ENCODE measurements at regions of chr19 and their contacts with region 1.

Region 1: GRCh38 chr19:41859618-41860418 is at the start of gene RPS19:
- DNase-seq: peak; percentile 96 to 99 (median 98)
- ATAC-seq: peak; percentile 87
- H3K4me3 ChIP-seq: peak within 1 kb of the TSS; percentile 74 to 92
- H3K4me3 Mint-ChIP-seq: peak within 1 kb of the TSS; percentile 94
- H3K27ac ChIP-seq: peak within 1 kb of the TSS; percentile 79 to 97
- H3K27ac Mint-ChIP-seq: peak within 1 kb of the TSS; percentile 96
- H3K4me1 ChIP-seq: peaks cover 46% of the 10 kb centered on the region
- H3K4me1 Mint-ChIP-seq: peaks cover 50% of the 10 kb centered on the region
- H3K27me3 ChIP-seq: no peaks in the 10 kb centered on the region
- H3K27me3 Mint-ChIP-seq: peaks cover 4% of the 10 kb centered on the region
- CTCF ChIP-seq: peak; percentile 82
- total RNA-seq, gene RPS19: 3,663 to 3,781 TPM

Region 2: DNA sequence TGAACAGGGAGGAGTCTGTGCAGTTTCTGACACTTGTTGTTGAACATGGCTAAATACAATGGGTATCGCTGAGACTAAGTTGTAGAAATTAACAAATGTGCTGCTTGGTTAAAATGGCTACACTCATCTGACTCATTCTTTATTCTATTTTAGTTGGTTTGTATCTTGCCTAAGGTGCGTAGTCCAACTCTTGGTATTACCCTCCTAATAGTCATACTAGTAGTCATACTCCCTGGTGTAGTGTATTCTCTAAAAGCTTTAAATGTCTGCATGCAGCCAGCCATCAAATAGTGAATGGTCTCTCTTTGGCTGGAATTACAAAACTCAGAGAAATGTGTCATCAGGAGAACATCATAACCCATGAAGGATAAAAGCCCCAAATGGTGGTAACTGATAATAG is 88.4 kb before region 1 on chr19:
- CTCF ChIA-PET with region 1: no interaction called
- POLR2A ChIA-PET with region 1: no interaction called
- intact Hi-C with region 1: no loop called
- DNase-seq: no peak
- ATAC-seq: no peak
- H3K4me3 ChIP-seq: no peak overlapping the region
- H3K4me3 Mint-ChIP-seq: no peak overlapping the region
- H3K27ac ChIP-seq: no peak overlapping the region
- H3K27ac Mint-ChIP-seq: no peak overlapping the region
- H3K4me1 ChIP-seq: peaks cover 32% of the 10 kb centered on the region
- H3K4me1 Mint-ChIP-seq: peaks cover 37% of the 10 kb centered on the region
- H3K27me3 ChIP-seq: peaks cover 3 to 9% of the 10 kb centered on the region in 2 experiments
- H3K27me3 Mint-ChIP-seq: peaks cover 51% of the 10 kb centered on the region
- CTCF ChIP-seq: no peak

Region 3: DNA sequence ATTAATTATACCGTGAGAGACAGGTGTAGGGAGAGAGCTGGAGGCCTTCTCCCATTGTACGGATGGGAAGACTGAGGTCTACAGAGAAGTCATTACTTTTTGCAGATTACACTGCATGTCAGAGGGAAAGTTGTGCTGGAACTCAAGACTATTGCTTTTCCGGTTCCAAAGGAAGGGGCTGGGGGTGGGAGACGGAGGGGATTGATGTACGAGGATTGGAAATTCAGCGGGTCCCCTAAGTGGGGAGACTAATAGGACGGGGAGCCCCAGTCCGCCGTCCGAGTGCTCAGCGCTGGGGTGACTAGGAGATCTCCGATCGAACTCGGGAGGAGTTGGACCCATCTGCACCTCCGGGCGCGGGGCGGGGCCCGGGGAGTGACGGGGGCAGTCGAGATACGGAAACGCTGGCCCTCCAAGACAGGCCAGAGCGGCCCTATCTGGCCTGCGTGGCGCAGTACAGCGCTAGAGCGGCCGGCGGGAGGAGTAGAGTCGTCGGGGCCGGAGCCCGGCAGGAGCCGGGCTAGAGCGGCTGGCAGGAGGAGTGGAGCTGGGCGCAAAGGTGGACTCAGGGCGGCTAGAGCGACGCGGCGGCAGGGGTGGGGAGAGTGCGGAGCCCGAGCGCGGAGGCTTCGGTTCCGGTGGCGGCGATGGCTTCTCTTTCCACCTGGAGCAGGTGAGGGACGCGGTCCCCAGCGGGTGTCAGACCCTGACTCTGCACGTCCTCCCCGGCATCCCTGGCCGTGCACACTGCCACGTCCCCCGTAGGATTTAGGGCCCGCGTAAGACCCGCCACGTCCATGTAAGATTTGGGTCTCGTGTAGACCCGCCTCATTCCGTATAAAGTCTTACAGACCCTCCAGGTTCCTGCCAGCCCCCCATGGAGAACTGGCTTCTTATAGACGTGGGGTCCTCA is 24.3 kb after region 1 on chr19:
- CTCF ChIA-PET with region 1: interaction called, 37 read pairs
- POLR2A ChIA-PET with region 1: interaction called, 120 read pairs
- intact Hi-C with region 1: loop called (anchors 1 kb)
- DNase-seq: peak; percentile 78 to 96 (median 90)
- ATAC-seq: peak; percentile 41
- H3K4me3 ChIP-seq: peak overlapping the region; percentile 97 to 99
- H3K4me3 Mint-ChIP-seq: peak overlapping the region; percentile 93
- H3K27ac ChIP-seq: peak overlapping the region; percentile 78 to 90
- H3K27ac Mint-ChIP-seq: peak overlapping the region; percentile 99
- H3K4me1 ChIP-seq: peaks cover 50% of the 10 kb centered on the region
- H3K4me1 Mint-ChIP-seq: peaks cover 68% of the 10 kb centered on the region
- H3K27me3 ChIP-seq: no peaks in the 10 kb centered on the region
- H3K27me3 Mint-ChIP-seq: no peaks in the 10 kb centered on the region
- CTCF ChIP-seq: no peak

Region 4: GRCh38 chr19:41928221-41928683 is 68.4 kb after region 1 on chr19 and contains the start of gene ERFL:
- CTCF ChIA-PET with region 1: interaction called, 7 read pairs
- POLR2A ChIA-PET with region 1: interaction called, 15 read pairs
- intact Hi-C with region 1: no loop called
- DNase-seq: peak in 3 of 9 experiments; percentile 23 to 55 (median 40)
- ATAC-seq: peak; percentile 37
- H3K4me3 ChIP-seq: peak within 1 kb of the TSS; percentile 54 to 58
- H3K4me3 Mint-ChIP-seq: no peak within 1 kb of the TSS
- H3K27ac ChIP-seq: peak within 1 kb of the TSS in 1 of 2 experiments; percentile 56
- H3K27ac Mint-ChIP-seq: peak within 1 kb of the TSS; percentile 96
- H3K4me1 ChIP-seq: peaks cover 24% of the 10 kb centered on the region
- H3K4me1 Mint-ChIP-seq: peaks cover 34% of the 10 kb centered on the region
- H3K27me3 ChIP-seq: peaks cover 0 to 13% of the 10 kb centered on the region in 2 experiments
- H3K27me3 Mint-ChIP-seq: no peaks in the 10 kb centered on the region
- CTCF ChIP-seq: no peak
- total RNA-seq, gene ERFL: 5.4 to 6.8 TPM

Region 5: GRCh38 chr19:41951686-41952172 is 91.9 kb after region 1 on chr19:
- CTCF ChIA-PET with region 1: interaction called, 43 read pairs
- POLR2A ChIA-PET with region 1: interaction called, 23 read pairs
- intact Hi-C with region 1: loop called (anchors 1 to 2 kb)
- DNase-seq: peak; percentile 73 to 97 (median 89)
- ATAC-seq: peak; percentile 88
- H3K4me3 ChIP-seq: no peak overlapping the region
- H3K4me3 Mint-ChIP-seq: no peak overlapping the region
- H3K27ac ChIP-seq: no peak overlapping the region
- H3K27ac Mint-ChIP-seq: peak overlapping the region; percentile 85
- H3K4me1 ChIP-seq: peaks cover 15% of the 10 kb centered on the region
- H3K4me1 Mint-ChIP-seq: peaks cover 31% of the 10 kb centered on the region
- H3K27me3 ChIP-seq: no peaks in the 10 kb centered on the region
- H3K27me3 Mint-ChIP-seq: no peaks in the 10 kb centered on the region
- CTCF ChIP-seq: peak; percentile 96

Region 6: GRCh38 chr19:42244347-42245220 is 384.8 kb after region 1 on chr19:
- CTCF ChIA-PET with region 1: no interaction called
- POLR2A ChIA-PET with region 1: no interaction called
- intact Hi-C with region 1: loop called (anchors 1 to 2 kb)
- DNase-seq: peak; percentile 79 to 96 (median 91)
- ATAC-seq: peak; percentile 38
- H3K4me3 ChIP-seq: peak overlapping the region; percentile 68 to 85
- H3K4me3 Mint-ChIP-seq: peak overlapping the region; percentile 98
- H3K27ac ChIP-seq: peak overlapping the region; percentile 49 to 92
- H3K27ac Mint-ChIP-seq: peak overlapping the region; percentile 94
- H3K4me1 ChIP-seq: peaks cover 36% of the 10 kb centered on the region
- H3K4me1 Mint-ChIP-seq: peaks cover 50% of the 10 kb centered on the region
- H3K27me3 ChIP-seq: no peaks in the 10 kb centered on the region
- H3K27me3 Mint-ChIP-seq: no peaks in the 10 kb centered on the region
- CTCF ChIP-seq: peak; percentile 68

Measured in CD8-positive, alpha-beta T cell (primary cell).